Motor neuron (in vitro differentiated cells): ENCODE measurements at regions of chr18 and their contacts with region 1.

Region 1: DNA sequence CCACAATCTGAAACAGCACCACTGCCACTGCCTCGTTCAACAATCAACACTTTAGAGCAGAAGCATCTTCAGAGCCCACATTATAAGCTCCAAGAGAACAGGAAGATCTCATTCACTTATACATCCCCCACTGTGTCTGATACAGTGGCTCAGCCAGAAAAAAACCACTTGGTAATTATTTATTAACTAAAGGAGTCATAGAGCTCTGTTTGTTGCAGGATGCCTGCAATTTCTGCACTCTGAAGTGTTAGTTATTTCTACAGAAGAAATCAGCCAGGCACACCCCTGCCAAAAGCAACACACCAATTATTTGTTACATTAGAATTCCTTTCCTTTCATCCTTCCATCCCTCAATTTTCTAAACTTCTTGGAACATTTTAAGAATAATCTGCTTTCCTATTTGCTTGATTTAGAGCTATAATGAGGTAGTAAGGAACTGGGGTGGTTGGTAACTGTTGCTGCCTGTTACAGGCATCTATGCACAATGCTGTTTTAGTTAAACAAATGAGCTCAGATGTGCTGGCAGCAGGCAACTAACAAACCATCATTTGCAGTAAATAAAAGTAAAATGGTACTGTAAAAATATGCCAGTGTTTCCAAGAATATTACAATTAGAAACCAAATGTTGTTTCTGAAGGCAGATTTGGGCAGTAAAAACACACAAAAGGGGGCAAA is 59.9 kb downstream of the DYM start:
- ATAC-seq: peak in 2 of 8 experiments; percentile 33 to 61
- H3K4me3 ChIP-seq: no peak overlapping the region
- H3K27ac ChIP-seq: no peak overlapping the region
- H3K4me1 ChIP-seq: peaks cover 4 to 9% of the 10 kb centered on the region in 2 donors

Region 2: GRCh38 chr18:49238433-49239042 is 162.0 kb before region 1 on chr18:
- in situ Hi-C with region 1: loop called in 1 of 9 experiments (anchors 25 kb)
- ATAC-seq: peak in 3 of 8 experiments; percentile 15 to 36 (median 35)
- H3K4me3 ChIP-seq: no peak overlapping the region
- H3K27ac ChIP-seq: no peak overlapping the region
- H3K4me1 ChIP-seq: no peaks in the 10 kb centered on the region

Region 3: DNA sequence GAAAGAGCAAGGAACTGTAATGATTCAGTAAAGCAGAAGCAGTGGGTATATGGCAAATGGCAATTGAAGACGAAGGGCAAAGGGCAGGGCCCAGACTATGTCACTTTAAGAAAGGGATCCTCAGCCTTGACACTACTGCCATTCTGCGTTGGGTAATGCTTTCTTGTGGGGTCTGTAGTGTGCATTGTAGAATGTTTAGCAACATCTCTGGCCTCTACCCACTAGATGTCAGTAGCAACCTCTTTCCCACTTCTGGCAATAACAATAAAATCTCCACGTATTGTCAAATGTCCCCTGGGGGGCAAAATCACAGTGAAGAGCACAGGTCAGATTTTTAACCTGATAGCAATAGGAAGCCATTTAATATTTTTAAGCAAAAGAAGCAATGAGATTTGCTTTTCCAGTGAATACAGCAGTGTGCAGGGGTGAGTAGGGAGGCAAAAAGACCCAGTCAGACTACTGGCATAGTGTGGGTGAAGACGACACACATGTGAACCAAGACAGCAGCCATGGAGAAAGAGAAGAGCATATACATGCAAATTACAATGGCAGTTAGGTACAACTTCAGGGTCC is 149.6 kb before region 1 on chr18:
- in situ Hi-C with region 1: loop called in 2 of 9 experiments (anchors 25 kb)
- ATAC-seq: peak in 5 of 8 experiments; percentile 22 to 75 (median 41)
- H3K4me3 ChIP-seq: no peak overlapping the region
- H3K27ac ChIP-seq: no peak overlapping the region
- H3K4me1 ChIP-seq: peaks cover 0 to 4% of the 10 kb centered on the region in 2 donors

Region 4: DNA sequence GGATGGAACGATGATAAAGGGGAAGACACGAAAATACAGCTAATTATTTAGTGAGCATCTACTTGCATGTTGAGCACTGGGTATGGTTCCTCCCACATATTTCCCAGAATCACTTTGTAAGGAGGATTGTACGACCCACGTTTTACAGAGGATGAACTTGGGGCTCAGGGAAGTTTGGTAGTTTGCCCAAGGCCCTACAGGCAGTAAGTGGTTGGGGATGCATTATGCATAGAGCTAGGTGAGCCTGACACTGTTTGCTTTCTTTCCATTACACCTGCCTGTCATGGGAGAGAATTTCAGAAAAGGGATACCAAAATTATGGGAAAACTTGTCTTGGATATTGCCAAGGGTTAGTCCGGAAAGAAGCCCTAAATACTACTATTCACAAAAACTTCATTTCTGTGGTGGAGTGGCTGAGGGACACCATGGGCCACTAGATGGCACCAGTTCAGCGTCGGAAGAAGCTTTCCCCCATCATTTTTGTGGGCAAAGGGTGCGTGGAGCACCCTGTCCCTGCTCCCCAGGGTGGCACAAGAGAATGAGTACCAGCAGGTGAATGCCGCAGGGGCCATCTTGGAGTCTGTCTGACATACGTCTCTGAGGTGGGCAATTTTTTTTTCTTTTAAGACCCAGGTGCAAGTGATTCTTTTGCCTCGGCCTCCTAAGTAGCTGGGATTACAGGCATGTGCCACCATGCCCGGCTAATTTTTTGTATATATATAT is 110.0 kb after region 1 on chr18:
- in situ Hi-C with region 1: no loop called
- ATAC-seq: peak; percentile 55 to 87 (median 74)
- H3K4me3 ChIP-seq: no peak overlapping the region
- H3K27ac ChIP-seq: no peak overlapping the region
- H3K4me1 ChIP-seq: peaks cover 0 to under 1% of the 10 kb centered on the region in 2 donors

Region 5: DNA sequence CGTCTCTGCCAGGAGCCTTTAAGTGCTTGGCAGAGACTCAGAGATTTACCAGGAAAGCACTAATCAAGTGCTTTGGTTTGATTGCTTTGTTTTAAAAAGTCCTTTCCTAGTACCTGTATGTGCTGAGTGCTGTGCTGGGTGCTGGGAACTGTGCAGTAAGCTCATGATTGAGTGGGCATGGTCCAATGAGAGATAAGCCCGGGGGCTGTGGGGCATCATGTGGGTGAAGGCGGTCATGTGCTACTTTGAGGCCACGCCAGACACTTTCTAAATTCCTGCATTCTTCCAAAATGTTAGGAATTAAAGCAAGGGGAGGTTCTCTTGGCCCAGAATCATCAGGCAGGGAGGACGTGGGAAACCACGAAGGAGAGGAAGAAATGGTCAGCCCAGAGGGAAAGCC is 303.8 kb after region 1 on chr18:
- in situ Hi-C with region 1: no loop called
- ATAC-seq: peak in 1 of 8 experiments; percentile 41
- H3K4me3 ChIP-seq: no peak overlapping the region
- H3K27ac ChIP-seq: no peak overlapping the region
- H3K4me1 ChIP-seq: no peaks in the 10 kb centered on the region